Motor neuron (in vitro differentiated cells): ENCODE measurements at regions of chr2 and their contacts with region 1.

Region 1: DNA sequence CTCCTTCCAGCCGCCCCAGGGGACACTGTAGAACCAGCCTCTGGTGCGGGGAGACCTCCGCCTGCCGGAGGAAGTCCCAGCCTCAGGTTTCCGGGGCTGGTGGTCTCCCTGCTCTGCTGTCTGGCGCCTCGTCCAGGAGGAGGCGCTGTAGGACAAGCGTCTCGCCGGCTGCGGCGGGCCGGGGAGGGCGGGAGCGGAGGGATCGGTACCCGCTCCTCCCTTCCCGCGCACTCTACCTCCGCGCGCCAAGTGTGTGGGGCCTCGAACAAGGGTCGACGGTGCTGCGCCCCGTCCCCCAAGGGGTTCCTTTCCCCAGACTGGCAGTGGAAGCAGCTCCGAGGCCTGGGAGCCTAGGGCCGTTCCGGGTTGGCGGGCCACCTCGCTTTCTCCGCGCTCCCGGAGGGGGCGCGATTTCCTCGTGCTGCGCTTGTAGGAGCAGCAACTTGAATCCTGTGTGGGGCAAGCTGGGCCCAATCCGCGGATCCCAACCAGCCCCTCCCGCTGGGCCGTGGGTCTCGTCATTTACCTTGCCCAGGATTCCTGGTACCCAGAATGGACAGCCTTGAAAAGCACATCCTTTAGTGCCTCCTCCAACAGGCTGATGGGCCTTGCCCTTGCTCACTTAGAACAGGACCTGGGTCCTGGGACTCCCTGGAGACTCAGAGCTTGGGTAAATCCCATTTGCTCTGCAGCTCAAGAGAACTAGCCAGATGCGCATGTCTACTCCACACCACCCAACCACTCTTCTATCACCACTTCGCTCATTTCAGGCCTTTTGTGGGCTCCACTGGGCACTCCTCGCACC is 10.6 kb upstream of the HOXD4 start:
- ATAC-seq: peak; percentile 54 to 83 (median 80)
- H3K4me3 ChIP-seq: peak overlapping the region; percentile 62 to 99 (median 97)
- H3K27ac ChIP-seq: peak overlapping the region; percentile 70 to 100
- H3K4me1 ChIP-seq: peaks cover 49 to 59% of the 10 kb centered on the region in 2 donors

Region 2: GRCh38 chr2:176297067-176297466 is 156.4 kb after region 1 on chr2:
- in situ Hi-C with region 1: no loop called
- ATAC-seq: peak in 5 of 8 experiments; percentile 98 to 99 (median 99)
- H3K4me3 ChIP-seq: no peak overlapping the region
- H3K27ac ChIP-seq: no peak overlapping the region
- H3K4me1 ChIP-seq: peaks cover 14 to 15% of the 10 kb centered on the region in 2 donors

Region 3: GRCh38 chr2:176364273-176364977 is 223.7 kb after region 1 on chr2:
- in situ Hi-C with region 1: no loop called
- ATAC-seq: peak in 3 of 8 experiments; percentile 54 to 85 (median 58)
- H3K4me3 ChIP-seq: no peak overlapping the region
- H3K27ac ChIP-seq: no peak overlapping the region
- H3K4me1 ChIP-seq: no peaks in the 10 kb centered on the region

Region 4: GRCh38 chr2:176454893-176455811 is 314.4 kb after region 1 on chr2:
- in situ Hi-C with region 1: loop called in 8 of 9 experiments (anchors 5 to 25 kb)
- ATAC-seq: peak; percentile 18 to 79 (median 52)
- H3K4me3 ChIP-seq: peak overlapping the region in 1 of 5 donors; percentile 5
- H3K27ac ChIP-seq: peak overlapping the region; percentile 56 to 58
- H3K4me1 ChIP-seq: peaks cover 33 to 38% of the 10 kb centered on the region in 2 donors

Region 5: DNA sequence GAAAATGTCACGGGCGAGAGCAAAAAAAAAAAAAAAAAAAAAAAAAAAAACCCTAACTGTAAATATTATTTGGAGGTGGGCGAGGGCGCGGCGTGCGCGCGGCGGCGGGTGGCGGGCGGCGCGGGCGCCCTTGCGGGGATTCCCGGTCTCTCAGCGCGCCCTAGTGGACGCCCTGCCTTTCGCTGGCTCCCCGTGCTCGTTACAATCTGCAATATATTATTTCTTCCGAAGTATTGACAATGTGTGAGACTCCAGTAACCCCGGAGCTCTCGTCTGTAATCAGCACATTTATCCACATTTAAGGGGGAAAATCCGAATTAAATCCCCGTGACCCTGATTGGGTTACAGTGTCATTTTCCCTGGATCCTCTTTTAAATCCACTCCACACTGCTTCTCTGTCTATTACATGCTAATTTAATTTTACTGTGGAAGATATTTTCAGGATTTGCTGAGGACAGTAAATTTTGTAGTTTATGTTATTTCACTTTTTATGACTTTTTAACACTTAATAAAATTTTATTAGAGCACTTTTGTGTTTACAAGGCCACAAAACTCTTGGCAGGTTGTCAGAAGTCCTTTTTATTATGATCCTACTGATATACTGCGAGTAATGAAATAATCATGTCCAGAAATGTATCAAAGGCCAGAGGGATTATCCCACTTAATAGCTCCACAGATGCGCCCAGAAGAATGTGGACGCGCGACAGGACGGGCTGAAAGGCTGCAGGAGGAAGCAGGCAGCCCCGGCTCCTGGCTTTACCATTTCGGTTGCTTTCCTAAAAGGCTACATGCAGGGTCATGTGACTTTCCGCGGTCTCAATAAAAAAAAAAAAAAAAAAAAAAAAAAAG is 497.7 kb after region 1 on chr2:
- in situ Hi-C with region 1: loop called in 3 of 9 experiments (anchors 10 to 25 kb)
- ATAC-seq: peak; percentile 65 to 96 (median 90)
- H3K4me3 ChIP-seq: peak overlapping the region; percentile 46 to 56 (median 49)
- H3K27ac ChIP-seq: no peak overlapping the region
- H3K4me1 ChIP-seq: peaks cover 0 to 22% of the 10 kb centered on the region in 2 donors

Region 6: GRCh38 chr2:176830362-176830761 is 689.6 kb after region 1 on chr2:
- in situ Hi-C with region 1: loop called in 1 of 9 experiments (anchors 25 kb)
- ATAC-seq: peak in 5 of 8 experiments; percentile 27 to 69 (median 45)
- H3K4me3 ChIP-seq: no peak overlapping the region
- H3K27ac ChIP-seq: no peak overlapping the region
- H3K4me1 ChIP-seq: peaks cover 6 to 15% of the 10 kb centered on the region in 2 donors

Region 7: GRCh38 chr2:177164584-177165052 is 1023.9 kb after region 1 on chr2:
- in situ Hi-C with region 1: loop called in 1 of 9 experiments (anchors 25 kb)
- ATAC-seq: peak; percentile 66 to 93 (median 90)
- H3K4me3 ChIP-seq: peak overlapping the region; percentile 18 to 31 (median 25)
- H3K27ac ChIP-seq: peak overlapping the region; percentile 77 to 91
- H3K4me1 ChIP-seq: peaks cover 24 to 47% of the 10 kb centered on the region in 2 donors